HEK293T (cell line): ENCODE measurements at regions of chr1 and their contacts with region 1.

Region 1: DNA sequence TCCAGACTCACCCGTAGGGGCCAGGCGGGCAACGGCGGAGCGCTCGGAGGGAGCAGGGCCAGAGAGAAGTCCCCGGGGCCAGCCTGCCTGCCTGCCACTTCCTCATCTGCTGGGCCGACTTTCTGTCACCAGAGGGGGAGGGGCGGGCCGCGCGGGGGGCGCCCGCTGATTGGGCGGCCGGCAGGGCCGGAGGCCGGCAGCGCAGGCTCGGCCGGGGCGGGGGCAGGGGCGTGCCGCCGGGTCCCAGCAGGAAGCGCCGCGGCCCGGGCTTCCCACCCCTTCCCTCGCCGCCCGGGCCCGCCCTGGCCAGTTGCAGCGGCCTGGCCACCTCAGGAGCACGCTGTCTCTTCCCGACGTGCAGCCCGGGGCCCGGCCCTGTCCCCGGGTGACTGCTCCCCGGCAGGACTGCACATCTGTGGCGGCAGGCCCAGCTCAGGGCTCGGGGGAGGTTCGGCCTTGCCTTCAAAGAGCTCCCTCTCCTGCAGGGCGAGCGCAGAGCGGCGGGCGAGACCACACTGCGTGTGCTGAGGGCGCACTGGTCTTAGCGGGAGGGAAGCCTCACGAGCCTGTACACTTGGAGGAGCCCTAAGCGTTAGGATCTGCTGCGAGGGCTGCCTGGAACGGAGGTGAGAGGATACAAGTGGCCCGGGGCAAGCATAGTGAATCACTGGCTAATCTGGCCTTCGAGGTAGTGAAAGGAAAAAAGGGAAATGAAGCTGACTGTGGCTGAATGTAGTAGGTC is at the start of gene ELOVL1:
- DNase-seq: peak; percentile 89

Region 2: DNA sequence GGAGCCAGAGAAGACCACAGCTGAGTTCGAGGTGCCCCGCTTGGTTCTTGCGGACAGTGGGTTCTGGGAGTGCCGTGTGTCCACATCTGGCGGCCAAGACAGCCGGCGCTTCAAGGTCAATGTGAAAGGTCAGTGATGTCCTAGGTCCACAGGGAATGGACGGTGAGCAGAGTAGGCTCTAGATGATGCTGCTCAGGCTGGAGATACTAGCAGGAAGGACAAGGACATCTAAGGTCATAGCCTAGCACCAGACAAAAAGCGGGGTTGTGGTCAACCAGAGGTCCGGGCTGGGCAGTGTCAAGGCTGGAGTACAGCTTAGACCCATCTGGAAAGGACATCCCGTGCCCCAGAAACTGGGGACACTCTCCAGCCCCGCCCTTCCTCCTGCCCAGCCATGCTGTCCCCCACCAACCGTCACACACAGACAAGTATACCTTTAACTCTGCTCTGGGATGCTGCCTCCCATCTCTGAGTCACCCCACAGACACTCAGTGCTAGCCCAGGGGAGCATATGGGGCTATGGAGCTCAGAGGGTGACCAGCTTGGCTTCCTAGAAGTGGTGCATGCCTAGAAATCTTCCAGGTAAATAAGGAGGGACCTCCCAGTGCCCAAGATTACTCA is 58.6 kb before region 1 on chr1:
- CTCF ChIA-PET with region 1: no interaction called
- POLR2A ChIA-PET with region 1: no interaction called
- DNase-seq: no peak

Region 3: GRCh38 chr1:43389326-43390313 is 21.5 kb after region 1 on chr1 and contains the starts of genes MED8 and SZT2:
- CTCF ChIA-PET with region 1: no interaction called
- POLR2A ChIA-PET with region 1: interaction called, 12 read pairs
- DNase-seq: peak; percentile 94

Region 4: DNA sequence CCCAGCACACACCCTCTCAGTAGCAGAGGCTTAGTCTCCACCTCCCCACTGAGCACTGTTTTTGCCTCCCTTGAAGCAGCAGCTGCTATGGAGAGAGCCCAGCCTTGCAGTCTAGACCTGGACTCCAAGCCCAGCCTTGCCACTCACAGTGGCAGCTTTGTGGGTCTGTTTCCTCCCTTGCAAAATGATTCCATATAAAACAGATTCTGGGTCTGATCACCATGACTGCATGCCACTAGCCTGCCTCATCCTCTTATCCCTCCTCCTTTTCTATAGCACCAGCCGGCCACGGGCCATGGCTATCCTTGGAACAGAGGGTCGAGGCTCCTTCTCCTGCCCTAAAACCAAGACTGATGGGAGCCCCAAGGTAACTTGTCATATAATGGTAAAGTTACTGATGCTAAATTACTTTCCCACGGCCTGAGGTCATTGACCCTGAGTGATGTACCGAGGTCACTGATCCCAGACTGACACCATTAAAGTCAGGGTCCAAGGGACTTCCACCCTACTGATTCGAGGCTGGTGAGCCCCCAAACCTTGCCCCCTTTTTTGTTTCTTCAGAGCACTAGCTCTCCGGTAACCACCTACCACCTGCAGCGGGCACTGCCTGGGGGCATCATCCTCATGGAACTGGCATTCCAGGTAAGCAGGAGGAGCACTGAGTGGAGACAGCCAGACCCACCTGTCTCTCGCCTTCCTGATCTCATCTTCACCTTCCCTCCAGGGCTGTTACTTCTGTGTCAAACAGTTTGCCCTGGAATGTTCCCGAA is 77.7 kb after region 1 on chr1:
- CTCF ChIA-PET with region 1: no interaction called
- POLR2A ChIA-PET with region 1: no interaction called
- DNase-seq: no peak